ENCODE measurements at regions of chr2 and their contacts with region 1.

Region 1: GRCh38 chr2:240663546-240664190 is 19.0 kb downstream of the AQP12B start:
- DNase-seq: no peak
- ATAC-seq: peak; percentile 69
- H3K4me3 ChIP-seq: no peak overlapping the region
- H3K27ac ChIP-seq: no peak overlapping the region
- H3K4me1 ChIP-seq: no peaks in the 10 kb centered on the region
- H3K27me3 ChIP-seq: peaks cover 32% of the 10 kb centered on the region; the same call in 1 of the 2 replicates
- CTCF ChIP-seq: 0 out of 6 replicates have a peak, but pooled peaks of 2 of the 3 experiments have one; percentile 11 to 22
- POLR2A ChIP-seq: no peak
- RAD21 ChIP-seq: no peak

Region 2: DNA sequence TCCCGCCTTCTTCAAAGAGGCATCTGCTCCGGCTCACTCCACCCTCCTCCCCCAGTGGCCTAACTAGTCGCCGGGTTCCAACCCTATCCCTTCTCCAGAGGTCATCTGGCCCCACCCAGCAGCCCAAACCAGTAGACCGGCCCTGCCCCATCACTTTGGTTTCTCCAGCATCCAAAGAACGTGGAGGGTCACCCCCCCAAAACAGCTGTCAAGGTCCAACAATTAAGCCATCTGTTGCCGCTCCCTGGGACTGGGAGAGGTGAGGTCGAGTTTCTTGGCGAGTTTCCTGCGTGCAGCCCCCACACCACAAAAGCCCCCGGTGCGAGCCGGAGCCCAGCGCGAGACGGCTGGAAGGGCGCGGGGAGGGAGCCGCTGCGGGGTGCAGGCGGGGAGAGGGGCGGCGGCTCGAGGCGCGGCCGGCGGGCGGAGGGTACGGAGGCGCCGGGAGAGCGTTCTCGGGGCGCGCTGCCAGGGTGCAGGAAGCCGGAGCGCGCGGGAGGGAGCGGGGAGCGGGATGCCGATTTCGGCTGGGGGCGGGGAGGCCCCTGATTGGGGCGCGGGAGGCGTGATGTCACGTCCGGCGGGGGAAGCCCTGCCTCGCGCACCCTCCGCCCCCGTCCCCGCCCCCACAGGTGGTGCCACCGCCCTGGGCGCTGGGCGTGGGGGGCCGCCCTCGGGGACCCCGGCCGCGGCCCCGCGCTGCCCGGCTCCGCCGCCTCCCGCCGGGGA is 228.8 kb before region 1 on chr2:
- CTCF ChIA-PET with region 1: no interaction called
- POLR2A ChIA-PET with region 1: no interaction called
- RAD21 ChIA-PET with region 1: no interaction called
- intact Hi-C with region 1: no loop called
- DNase-seq: peak; percentile 69
- ATAC-seq: peak; percentile 60
- H3K4me3 ChIP-seq: peak overlapping the region; percentile 74 to 96
- H3K27ac ChIP-seq: peak overlapping the region; percentile 81
- H3K4me1 ChIP-seq: peaks cover 29 to 57% of the 10 kb centered on the region in 2 experiments
- H3K27me3 ChIP-seq: no peaks in the 10 kb centered on the region
- CTCF ChIP-seq: no peak
- POLR2A ChIP-seq: no peak
- RAD21 ChIP-seq: no peak

Region 3: DNA sequence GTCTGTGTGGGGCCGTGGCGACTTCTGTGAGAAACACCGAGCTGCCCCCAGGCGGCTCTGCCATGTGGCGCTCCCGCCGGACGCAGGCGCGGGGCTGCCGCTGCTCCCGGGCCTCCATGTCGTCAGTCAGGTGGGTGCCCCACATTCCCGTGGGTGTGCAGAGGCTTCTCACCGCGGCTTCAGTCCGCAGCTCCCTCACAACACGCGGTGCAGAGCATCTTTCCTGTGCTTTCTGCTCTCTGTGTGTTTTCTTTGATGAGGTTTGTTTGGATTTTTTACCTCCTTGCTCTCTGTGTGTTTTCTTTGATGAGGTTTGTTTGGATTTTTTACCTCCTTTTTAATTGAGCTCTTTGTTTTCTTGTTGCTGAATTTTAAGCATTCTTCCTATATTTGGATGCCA is 41.0 kb after region 1 on chr2:
- CTCF ChIA-PET with region 1: no interaction called
- POLR2A ChIA-PET with region 1: no interaction called
- RAD21 ChIA-PET with region 1: no interaction called
- intact Hi-C with region 1: loop called (anchors 5 kb)
- DNase-seq: no peak
- ATAC-seq: no peak
- H3K4me3 ChIP-seq: no peak overlapping the region
- H3K27ac ChIP-seq: no peak overlapping the region
- H3K4me1 ChIP-seq: no peaks in the 10 kb centered on the region
- H3K27me3 ChIP-seq: no peaks in the 10 kb centered on the region; the same call in 1 of the 2 replicates
- CTCF ChIP-seq: no peak
- POLR2A ChIP-seq: no peak
- RAD21 ChIP-seq: no peak

Region 4: GRCh38 chr2:240832205-240832727 is 168.6 kb after region 1 on chr2:
- CTCF ChIA-PET with region 1: no interaction called
- POLR2A ChIA-PET with region 1: no interaction called
- RAD21 ChIA-PET with region 1: no interaction called
- intact Hi-C with region 1: loop called (anchors 10 kb)
- DNase-seq: peak; percentile 83
- ATAC-seq: peak; percentile 95
- H3K4me3 ChIP-seq: peak overlapping the region; percentile 29 to 48
- H3K27ac ChIP-seq: no peak overlapping the region
- H3K4me1 ChIP-seq: peaks cover 4 to 6% of the 10 kb centered on the region in 2 experiments; a peak in 3 of 4 replicates
- H3K27me3 ChIP-seq: peaks cover 7% of the 10 kb centered on the region; the same call in 1 of the 2 replicates
- CTCF ChIP-seq: no peak
- POLR2A ChIP-seq: no peak
- RAD21 ChIP-seq: no peak

Measured in HCT116 (cell line).